Activated CD4-positive, alpha-beta memory T cell treated with anti-CD3 and anti-CD28 coated beads for 36 hours (primary cell): ENCODE measurements at regions of chr4 and their contacts with region 1.

Region 1: DNA sequence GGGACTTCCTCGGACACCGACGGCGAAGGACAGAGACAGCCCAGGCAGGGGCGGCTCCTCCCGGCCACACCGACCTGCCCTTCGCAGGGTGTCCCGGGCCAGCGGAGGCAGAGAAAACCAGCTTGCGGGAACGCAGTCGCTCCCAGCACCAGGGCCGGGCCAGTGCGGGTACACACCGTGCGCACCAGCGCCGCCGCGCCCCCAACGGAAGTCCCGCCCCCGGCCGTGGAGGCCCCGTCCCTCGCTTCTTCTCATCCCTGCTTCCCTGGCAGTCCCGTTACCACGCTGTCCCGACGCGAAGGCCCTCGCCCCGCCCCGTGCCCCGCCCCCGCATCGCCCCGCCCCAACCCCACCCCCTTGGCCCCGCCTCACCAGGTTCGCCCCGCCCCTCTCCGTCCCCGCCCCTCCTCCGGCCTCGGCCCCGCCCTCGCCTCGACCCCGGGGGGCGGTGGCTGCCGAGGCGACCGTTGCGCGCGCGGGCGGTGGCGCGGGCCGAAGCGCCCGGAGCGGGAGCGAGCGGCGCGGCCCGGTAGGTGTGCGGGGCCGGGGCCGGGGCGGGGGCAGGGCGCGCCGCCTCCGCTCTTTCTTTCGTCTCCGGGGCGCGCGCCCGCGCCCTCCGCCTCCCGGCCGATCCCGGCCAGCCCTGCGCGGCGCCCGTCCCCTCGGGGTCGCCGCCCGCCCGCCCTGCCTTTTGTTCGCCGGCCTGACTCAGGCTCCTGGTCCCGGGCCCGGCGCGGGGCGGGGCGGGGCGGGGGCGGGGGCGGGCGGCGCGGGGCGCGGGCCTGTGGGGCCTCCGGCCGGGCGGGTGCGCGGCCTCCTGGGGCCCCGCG is at the start of gene RGS12:
- DNase-seq: peak; percentile 94
- H3K4me3 Mint-ChIP-seq: peak within 1 kb of the TSS; percentile 79
- H3K27ac Mint-ChIP-seq: peak within 1 kb of the TSS; percentile 2
- H3K4me1 Mint-ChIP-seq: peaks cover 12% of the 10 kb centered on the region
- H3K27me3 Mint-ChIP-seq: peaks cover 10% of the 10 kb centered on the region
- total RNA-seq, gene RGS12: 8.6 to 8.8 TPM

Region 2: DNA sequence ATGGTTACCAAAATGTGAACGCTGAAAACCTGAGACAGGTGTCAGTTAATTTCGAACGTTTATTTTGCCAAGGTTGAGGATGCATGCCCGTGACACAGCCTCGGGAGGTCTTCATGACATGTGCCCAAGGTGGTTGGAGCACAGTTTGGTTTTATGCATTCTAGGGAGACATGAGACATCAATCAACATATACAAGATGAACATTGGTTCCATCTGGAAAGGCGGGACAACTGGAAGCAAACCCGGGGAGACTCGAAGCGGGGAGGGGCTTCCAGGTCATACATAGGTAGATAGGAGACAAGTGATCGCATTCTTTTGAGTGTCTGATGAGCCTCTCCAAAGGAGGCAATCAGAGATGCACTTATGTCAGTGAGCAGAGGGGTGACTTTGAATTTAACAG is 510.9 kb before region 1 on chr4:
- CTCF ChIA-PET with region 1: no interaction called
- POLR2A ChIA-PET with region 1: no interaction called
- intact Hi-C with region 1: no loop called
- DNase-seq: no peak
- H3K4me3 Mint-ChIP-seq: no peak overlapping the region
- H3K27ac Mint-ChIP-seq: no peak overlapping the region
- H3K4me1 Mint-ChIP-seq: peaks cover 37% of the 10 kb centered on the region
- H3K27me3 Mint-ChIP-seq: no peaks in the 10 kb centered on the region

Region 3: DNA sequence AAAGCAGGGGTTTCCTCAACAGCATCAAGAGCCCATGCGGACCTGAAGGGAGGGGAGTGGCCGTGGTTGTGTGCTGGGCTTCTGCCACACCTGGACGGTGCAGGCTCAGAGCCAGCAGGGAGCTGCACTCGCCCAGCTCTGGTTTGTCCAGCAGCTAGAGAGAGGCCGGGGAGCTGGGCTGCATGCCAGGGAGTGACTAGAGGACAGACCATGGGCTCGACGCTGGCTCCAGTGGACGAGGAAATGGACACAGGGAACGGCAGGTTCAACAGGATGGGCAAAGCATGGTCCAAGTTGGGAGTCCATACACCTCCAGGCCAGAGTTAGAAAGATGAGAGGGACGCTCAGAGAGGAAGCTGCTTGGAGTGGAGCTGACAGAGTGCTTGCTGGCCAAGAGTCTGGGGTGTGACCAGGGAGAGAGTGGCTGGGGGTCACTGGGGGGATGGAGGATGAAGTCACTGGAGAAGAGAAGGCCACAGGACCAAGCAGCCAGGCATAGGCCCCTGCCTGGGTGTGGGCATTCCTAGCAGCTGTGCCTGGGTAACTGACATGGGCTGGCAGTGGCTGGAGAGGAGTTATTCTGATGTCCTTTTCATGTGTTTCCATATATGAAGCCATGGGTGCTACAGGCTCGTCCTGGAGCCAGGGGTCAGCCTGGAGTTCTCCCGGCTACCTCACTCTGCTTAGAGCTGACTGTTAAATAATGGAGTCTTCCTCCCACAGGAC is 261.3 kb before region 1 on chr4:
- CTCF ChIA-PET with region 1: no interaction called
- POLR2A ChIA-PET with region 1: no interaction called
- intact Hi-C with region 1: no loop called
- DNase-seq: no peak
- H3K4me3 Mint-ChIP-seq: no peak overlapping the region
- H3K27ac Mint-ChIP-seq: no peak overlapping the region
- H3K4me1 Mint-ChIP-seq: no peaks in the 10 kb centered on the region
- H3K27me3 Mint-ChIP-seq: no peaks in the 10 kb centered on the region

Region 4: GRCh38 chr4:3074078-3074795 is 218.5 kb before region 1 on chr4 and contains the starts of genes HTT and HTT-AS:
- CTCF ChIA-PET with region 1: no interaction called
- POLR2A ChIA-PET with region 1: no interaction called
- intact Hi-C with region 1: loop called (anchors 1 kb)
- DNase-seq: peak; percentile 98
- H3K4me3 Mint-ChIP-seq: peak within 1 kb of the TSS; percentile 89
- H3K27ac Mint-ChIP-seq: peak within 1 kb of the TSS; percentile 88
- H3K4me1 Mint-ChIP-seq: peaks cover 24% of the 10 kb centered on the region
- H3K27me3 Mint-ChIP-seq: no peaks in the 10 kb centered on the region
- total RNA-seq, gene HTT: 57.6 to 69.8 TPM
- total RNA-seq, gene HTT-AS: not detected

Region 5: DNA sequence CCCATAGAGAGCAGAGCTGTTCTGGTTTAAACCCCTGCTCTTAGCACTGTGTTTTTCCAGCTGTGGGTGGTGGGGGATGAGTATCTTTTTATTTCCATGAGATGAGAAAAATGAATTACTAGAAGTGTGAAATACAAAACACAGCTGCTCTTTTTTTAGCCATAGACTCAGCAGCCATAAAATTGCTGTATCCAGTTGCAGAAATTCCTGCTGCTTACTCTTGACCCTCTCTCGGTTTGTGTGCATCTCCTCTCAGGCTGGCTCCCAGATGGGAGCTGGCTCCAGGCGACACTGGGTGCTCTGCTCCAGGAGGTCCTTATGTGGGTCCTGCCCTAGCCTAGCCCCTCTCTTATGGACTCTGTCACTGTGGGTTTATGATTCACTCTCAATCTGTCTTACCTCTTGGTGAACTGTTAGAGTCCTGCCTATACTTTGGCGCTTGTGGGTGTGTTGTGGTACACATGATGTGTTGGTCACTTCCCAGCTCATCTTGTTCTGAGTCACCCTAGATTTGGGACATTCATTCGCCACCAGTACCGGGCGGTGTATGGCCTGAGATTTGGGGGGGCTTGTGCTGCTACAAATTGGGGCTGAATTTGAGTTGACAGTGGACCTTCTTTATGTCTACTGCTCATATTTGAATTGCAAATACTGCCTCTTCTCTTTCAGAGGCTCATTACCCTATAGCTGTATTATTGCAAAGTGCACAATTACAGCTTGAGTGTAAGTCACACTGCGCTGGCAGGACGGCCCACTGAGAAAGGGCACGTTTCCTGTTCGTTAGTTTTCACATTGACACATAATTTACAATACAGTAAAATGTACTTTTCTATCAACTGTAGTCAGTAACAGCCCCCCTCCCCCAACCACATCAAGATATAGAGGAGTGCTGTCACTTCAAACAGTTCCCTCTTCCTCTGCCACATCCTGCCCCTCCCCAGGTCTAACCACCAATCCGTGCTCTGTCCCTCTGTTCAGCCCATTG is 90.8 kb before region 1 on chr4:
- CTCF ChIA-PET with region 1: no interaction called
- POLR2A ChIA-PET with region 1: no interaction called
- intact Hi-C with region 1: loop called (anchors 2 kb)
- DNase-seq: peak; percentile 81
- H3K4me3 Mint-ChIP-seq: no peak overlapping the region
- H3K27ac Mint-ChIP-seq: peak overlapping the region; percentile 82
- H3K4me1 Mint-ChIP-seq: peaks cover 39% of the 10 kb centered on the region
- H3K27me3 Mint-ChIP-seq: no peaks in the 10 kb centered on the region